Calu3 (cell line): ENCODE measurements at regions of chr9 and their contacts with region 1.

Region 1: DNA sequence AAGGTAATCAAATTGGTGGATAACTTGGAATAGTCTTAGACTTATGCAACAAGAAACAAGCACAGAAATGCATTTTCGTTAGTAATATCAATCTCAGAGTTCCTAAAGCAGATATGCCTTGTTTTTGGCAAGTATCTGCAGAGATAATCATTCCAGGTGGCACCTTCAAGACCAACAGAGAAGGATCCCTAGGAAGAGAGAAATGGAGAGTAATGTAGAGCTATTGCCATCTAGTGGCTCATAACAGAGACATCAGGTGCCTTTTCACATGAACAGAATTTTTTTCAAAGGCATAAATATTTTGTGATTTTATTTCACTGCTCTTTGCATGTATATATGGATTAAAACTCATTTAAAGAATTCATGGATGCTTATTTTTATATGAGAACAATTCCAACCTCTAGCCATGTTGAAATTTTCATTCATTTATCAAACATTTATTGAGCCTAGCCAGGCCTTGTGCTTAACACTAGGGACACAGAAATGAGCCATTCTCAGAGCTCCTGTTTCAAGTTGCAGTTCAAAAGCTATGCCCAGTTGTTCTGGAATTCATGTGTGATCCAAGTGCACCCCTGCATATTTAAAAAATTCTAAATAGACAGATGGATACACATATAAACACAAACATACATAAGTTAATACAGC is 117.5 kb upstream of the OR13F1 start:
- DNase-seq: no peak
- H3K4me3 Mint-ChIP-seq: no peak overlapping the region
- H3K27ac Mint-ChIP-seq: no peak overlapping the region
- H3K4me1 Mint-ChIP-seq: no peaks in the 10 kb centered on the region
- H3K27me3 Mint-ChIP-seq: no peaks in the 10 kb centered on the region
- CTCF ChIP-seq: no peak

Region 2: GRCh38 chr9:104177003-104177611 is 209.4 kb before region 1 on chr9:
- CTCF ChIA-PET with region 1: no interaction called
- intact Hi-C with region 1: loop called (anchors 2 kb)
- DNase-seq: no peak
- H3K4me3 Mint-ChIP-seq: no peak overlapping the region
- H3K27ac Mint-ChIP-seq: no peak overlapping the region
- H3K4me1 Mint-ChIP-seq: no peaks in the 10 kb centered on the region
- H3K27me3 Mint-ChIP-seq: no peaks in the 10 kb centered on the region
- CTCF ChIP-seq: no peak

Region 3: GRCh38 chr9:104682642-104683041 is 296.1 kb after region 1 on chr9:
- CTCF ChIA-PET with region 1: no interaction called
- intact Hi-C with region 1: loop called (anchors 5 kb)
- DNase-seq: peak; percentile 13
- H3K4me3 Mint-ChIP-seq: no peak overlapping the region
- H3K27ac Mint-ChIP-seq: no peak overlapping the region
- H3K4me1 Mint-ChIP-seq: no peaks in the 10 kb centered on the region
- H3K27me3 Mint-ChIP-seq: no peaks in the 10 kb centered on the region
- CTCF ChIP-seq: peak; percentile 26